Heart left ventricle (tissue), 16 donors: ENCODE measurements at regions of chr1 and their contacts with region 1.

Region 1: GRCh38 chr1:163528710-163529348 is 207.1 kb downstream of the NUF2 start:
- DNase-seq: no peak
- ATAC-seq: no peak
- H3K4me3 ChIP-seq: no peak overlapping the region
- H3K27ac ChIP-seq: no peak overlapping the region
- H3K4me1 ChIP-seq: no peaks in the 10 kb centered on the region
- H3K27me3 ChIP-seq: peaks cover 0 to 3% (median 0%) of the 10 kb centered on the region in 9 donors
- CTCF ChIP-seq: peak; percentile 39 to 66 (median 56)
- POLR2A ChIP-seq: no peak

Region 2: GRCh38 chr1:163410073-163410999 is 118.5 kb before region 1 on chr1:
- intact Hi-C with region 1: loop called in 4 of 10 experiments (anchors 5 to 10 kb)
- DNase-seq: no peak
- ATAC-seq: no peak
- H3K4me3 ChIP-seq: peak overlapping the region in 2 of 12 donors; percentile 8 to 20
- H3K27ac ChIP-seq: no peak overlapping the region
- H3K4me1 ChIP-seq: peaks cover 0 to 7% (median 0%) of the 10 kb centered on the region in 12 donors
- H3K27me3 ChIP-seq: peaks cover 0 to 4% (median 0%) of the 10 kb centered on the region in 9 donors
- CTCF ChIP-seq: peak; percentile 62 to 84 (median 72)
- POLR2A ChIP-seq: no peak

Region 3: GRCh38 chr1:165063181-165063965 is 1534.5 kb after region 1 on chr1:
- intact Hi-C with region 1: loop called in 1 of 10 experiments (anchors 5 kb)
- DNase-seq: no peak
- ATAC-seq: peak in 1 of 4 donors; percentile 83
- H3K4me3 ChIP-seq: no peak overlapping the region
- H3K27ac ChIP-seq: peak overlapping the region in 6 of 12 donors; percentile 5 to 61 (median 49)
- H3K4me1 ChIP-seq: peaks cover 0 to 11% (median 0%) of the 10 kb centered on the region in 12 donors
- H3K27me3 ChIP-seq: no peaks in the 10 kb centered on the region
- CTCF ChIP-seq: no peak
- POLR2A ChIP-seq: no peak